ENCODE measurements at regions of chr12 and their contacts with region 1.

Region 1: DNA sequence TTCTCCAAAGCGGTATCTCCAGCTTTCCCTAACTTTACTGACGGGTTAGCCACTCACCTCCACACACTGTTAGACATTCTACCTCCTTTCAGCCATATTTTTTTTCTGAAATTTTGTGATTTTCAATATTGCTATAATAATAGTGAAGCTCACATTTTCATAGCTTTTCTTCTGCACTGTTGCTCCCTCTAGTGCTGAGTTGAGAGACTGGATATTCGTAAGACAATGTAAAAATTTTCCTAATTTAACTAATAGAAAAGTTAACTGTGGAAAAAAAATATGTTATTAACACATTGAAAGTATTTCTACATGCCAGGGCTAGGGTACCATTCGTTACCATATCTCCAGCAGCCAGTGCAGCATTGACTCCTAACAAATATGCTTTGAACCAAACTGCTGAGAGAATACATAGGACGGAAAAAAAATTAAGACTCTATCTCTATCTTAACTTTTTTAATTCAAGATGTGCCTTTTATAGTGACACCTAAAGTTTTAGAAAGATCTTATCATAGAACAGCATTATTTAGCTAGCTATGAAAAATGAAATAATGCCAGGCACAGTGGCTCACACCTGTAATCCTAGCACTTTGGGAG is 48.7 kb upstream of the ABCC9 start:
- DNase-seq: no peak
- H3K4me3 ChIP-seq: no peak overlapping the region
- H3K27ac ChIP-seq: no peak overlapping the region
- H3K4me1 ChIP-seq: peaks cover 0 to 4% (median 2%) of the 10 kb centered on the region in 4 experiments; a peak in 1 of 7 replicates
- H3K27me3 ChIP-seq: no peaks in the 10 kb centered on the region
- CTCF ChIP-seq: peak in 2 of 3 experiments; percentile 34 to 38; a peak in 2 of 4 replicates
- EP300 ChIP-seq: no peak
- POLR2A ChIP-seq: no peak
- RAD21 ChIP-seq: peak; percentile 50 to 69

Region 2: DNA sequence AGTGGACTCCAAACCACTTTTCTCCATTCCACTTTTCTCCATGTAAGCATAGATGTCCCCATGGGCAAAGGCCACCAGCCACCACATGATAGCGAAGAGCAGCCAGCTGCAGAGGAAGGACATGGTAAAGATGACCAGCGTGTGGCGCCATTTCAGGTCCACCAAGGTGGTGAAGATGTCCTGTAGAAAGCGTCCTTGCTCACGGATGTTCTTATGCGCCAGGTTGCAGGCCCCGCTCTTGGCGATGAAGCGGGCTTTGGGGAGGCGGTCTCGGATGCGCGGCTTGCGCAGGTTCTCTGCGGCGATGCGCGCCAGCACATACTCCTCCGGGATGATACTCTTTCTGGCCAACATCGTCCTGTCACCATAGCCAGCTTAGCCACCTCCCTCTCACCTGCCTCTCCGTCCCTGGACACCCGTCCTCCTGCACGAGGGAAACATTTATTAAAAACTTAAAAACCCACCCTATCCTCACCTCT is 216.6 kb before region 1 on chr12:
- CTCF ChIA-PET with region 1: interaction called, 17 read pairs
- POLR2A ChIA-PET with region 1: no interaction called
- DNase-seq: peak; percentile 21 to 76
- H3K4me3 ChIP-seq: peak overlapping the region in 2 of 4 experiments; percentile 7 to 97; a peak in 3 of 8 replicates
- H3K27ac ChIP-seq: no peak overlapping the region
- H3K4me1 ChIP-seq: peaks cover 0 to 6% (median 0%) of the 10 kb centered on the region in 4 experiments; a peak in 1 of 7 replicates
- H3K27me3 ChIP-seq: peaks cover 0 to 9% (median 2%) of the 10 kb centered on the region in 4 experiments; a peak in 3 of 7 replicates
- CTCF ChIP-seq: peak; percentile 68 to 87 (median 82)
- EP300 ChIP-seq: no peak
- POLR2A ChIP-seq: no peak
- RAD21 ChIP-seq: peak; percentile 55 to 64

Region 3: DNA sequence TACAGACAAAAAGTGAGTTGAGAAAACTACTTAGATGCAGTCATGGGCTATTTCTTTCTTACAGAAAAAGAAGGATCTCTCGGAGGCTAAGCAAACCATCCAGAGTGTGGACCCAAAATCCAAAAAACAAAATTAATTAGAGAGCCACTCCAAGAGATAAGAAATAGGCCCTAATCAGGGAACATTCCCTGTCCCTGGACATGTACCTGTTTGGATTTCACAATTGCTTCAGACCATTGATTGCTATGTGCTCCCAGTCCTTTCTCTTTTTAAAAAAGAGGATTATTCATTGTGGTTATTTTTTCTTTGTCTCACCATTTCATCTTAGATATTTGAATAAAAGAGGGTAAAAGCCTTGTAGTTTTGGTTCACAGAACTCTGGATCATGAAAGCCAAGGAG is 1185.0 kb after region 1 on chr12:
- CTCF ChIA-PET with region 1: no interaction called
- POLR2A ChIA-PET with region 1: no interaction called
- DNase-seq: no peak
- H3K4me3 ChIP-seq: no peak overlapping the region
- H3K27ac ChIP-seq: no peak overlapping the region
- H3K4me1 ChIP-seq: no peaks in the 10 kb centered on the region
- H3K27me3 ChIP-seq: no peaks in the 10 kb centered on the region
- CTCF ChIP-seq: no peak
- EP300 ChIP-seq: no peak
- POLR2A ChIP-seq: no peak
- RAD21 ChIP-seq: no peak

Measured in H1 (cell line).